Caco-2 (cell line): ENCODE measurements at regions of chr17 and their contacts with region 1.

Region 1: DNA sequence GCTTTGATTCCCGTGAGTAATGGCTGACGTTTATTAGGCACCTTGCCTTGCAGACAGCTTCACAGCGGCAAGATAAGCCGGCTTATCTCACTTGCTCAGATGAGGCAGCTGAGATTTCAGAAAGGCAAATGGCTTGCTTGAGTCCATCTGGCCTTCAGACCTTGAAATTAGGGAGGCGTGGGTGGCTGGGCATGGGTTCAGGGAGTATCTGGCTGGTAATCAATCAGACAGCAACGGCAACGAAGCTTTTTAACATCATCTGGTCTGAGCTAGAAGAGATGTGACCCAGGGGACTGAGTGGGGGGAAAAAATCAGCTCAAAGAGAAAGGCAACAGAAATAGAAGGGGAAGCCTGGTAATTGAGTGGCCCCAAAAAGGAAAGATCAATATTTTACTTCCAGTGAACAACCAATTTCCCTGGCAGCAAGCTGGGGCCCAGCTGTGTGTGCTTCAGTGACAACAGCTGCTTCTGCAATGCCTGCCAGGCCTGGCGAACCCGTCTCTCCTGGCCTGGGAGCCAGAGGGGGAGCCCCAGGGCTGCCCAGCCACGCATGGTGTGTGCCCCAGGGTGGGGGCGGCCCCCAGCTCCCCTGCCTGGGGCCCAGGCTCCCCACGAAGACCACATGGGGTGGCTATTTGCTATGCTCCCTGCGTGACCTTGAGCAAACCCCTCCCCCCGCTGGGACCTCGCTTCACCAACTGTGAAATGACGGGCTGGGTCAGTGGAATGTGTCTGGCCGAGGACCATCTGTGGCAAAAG is 34.0 kb downstream of the RAB11FIP4 start:
- DNase-seq: peak; percentile 52 to 72
- H3K4me3 ChIP-seq: no peak overlapping the region
- H3K4me3 Mint-ChIP-seq: peak overlapping the region; percentile 9
- H3K27ac Mint-ChIP-seq: peak overlapping the region; percentile 66
- H3K4me1 ChIP-seq: peaks cover 13% of the 10 kb centered on the region
- H3K4me1 Mint-ChIP-seq: peaks cover 12% of the 10 kb centered on the region
- H3K27me3 ChIP-seq: no peaks in the 10 kb centered on the region
- H3K27me3 Mint-ChIP-seq: no peaks in the 10 kb centered on the region
- CTCF ChIP-seq: no peak

Region 2: GRCh38 chr17:31394544-31394943 is 30.9 kb before region 1 on chr17:
- CTCF ChIA-PET with region 1: no interaction called
- POLR2A ChIA-PET with region 1: no interaction called
- intact Hi-C with region 1: loop called (anchors 5 kb)
- DNase-seq: peak; percentile 79 to 87
- H3K4me3 ChIP-seq: no peak overlapping the region
- H3K4me3 Mint-ChIP-seq: no peak overlapping the region
- H3K27ac Mint-ChIP-seq: no peak overlapping the region
- H3K4me1 ChIP-seq: no peaks in the 10 kb centered on the region
- H3K4me1 Mint-ChIP-seq: no peaks in the 10 kb centered on the region
- H3K27me3 ChIP-seq: peaks cover 2% of the 10 kb centered on the region
- H3K27me3 Mint-ChIP-seq: peaks cover 14% of the 10 kb centered on the region
- CTCF ChIP-seq: no peak

Region 3: GRCh38 chr17:31596382-31597323 is 171.2 kb after region 1 on chr17:
- CTCF ChIA-PET with region 1: no interaction called
- POLR2A ChIA-PET with region 1: no interaction called
- intact Hi-C with region 1: no loop called
- DNase-seq: no peak
- H3K4me3 ChIP-seq: no peak overlapping the region
- H3K4me3 Mint-ChIP-seq: no peak overlapping the region
- H3K27ac Mint-ChIP-seq: peak overlapping the region; percentile 40
- H3K4me1 ChIP-seq: peaks cover 23% of the 10 kb centered on the region
- H3K4me1 Mint-ChIP-seq: peaks cover 15% of the 10 kb centered on the region
- H3K27me3 ChIP-seq: no peaks in the 10 kb centered on the region
- H3K27me3 Mint-ChIP-seq: no peaks in the 10 kb centered on the region
- CTCF ChIP-seq: no peak